ENCODE measurements at regions of chr15 and their contacts with region 1.

Region 1: DNA sequence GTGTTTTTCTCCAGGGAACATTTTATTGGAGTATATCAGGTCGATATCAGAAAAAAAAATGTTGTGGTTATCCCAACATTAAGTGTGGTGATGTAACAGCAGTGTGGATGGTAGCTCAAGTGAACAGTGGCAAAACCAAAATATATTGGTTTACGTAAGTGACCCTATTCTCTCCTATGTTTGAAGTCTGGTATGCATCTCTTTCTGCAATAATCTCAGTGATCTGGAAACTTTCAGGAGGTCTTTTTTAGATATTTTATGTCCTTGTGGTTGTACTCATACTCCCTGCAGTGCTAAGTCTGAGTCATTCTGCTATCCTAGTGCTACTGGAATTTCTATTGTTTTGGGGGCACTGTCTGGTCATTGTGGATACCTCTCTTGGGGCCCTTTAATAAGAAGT is 137.9 kb downstream of the SNRPN start:
- DNase-seq: no peak

Region 2: GRCh38 chr15:24761704-24762302 is 330.9 kb before region 1 on chr15:
- intact Hi-C with region 1: loop called in 1 of 2 experiments (anchors 10 kb)
- DNase-seq: no peak

Region 3: GRCh38 chr15:24944954-24945353 is 147.7 kb before region 1 on chr15:
- intact Hi-C with region 1: no loop called
- DNase-seq: no peak

Region 4: GRCh38 chr15:25072857-25073476 is 19.7 kb before region 1 on chr15:
- intact Hi-C with region 1: loop called in 1 of 2 experiments (anchors 1 kb)
- DNase-seq: no peak

Region 5: GRCh38 chr15:25192651-25193050 is 100.0 kb after region 1 on chr15:
- intact Hi-C with region 1: loop called in 1 of 2 experiments (anchors 10 kb)
- DNase-seq: no peak